ENCODE measurements at regions of chr16 and their contacts with region 1.

Region 1: GRCh38 chr16:87062569-87063442 is 254.4 kb downstream of the C16orf95 start:
- DNase-seq: peak; percentile 70 to 91
- ATAC-seq: peak; percentile 92 to 98
- H3K4me3 ChIP-seq: peak overlapping the region; percentile 30; the same call in 2 of the 3 replicates
- H3K27ac ChIP-seq: peak overlapping the region; percentile 58 to 69; a peak in 4 of 6 replicates
- H3K4me1 ChIP-seq: peaks cover 4% of the 10 kb centered on the region; the same call in 1 of the 3 replicates
- CTCF ChIP-seq: peak; percentile 84
- EP300 ChIP-seq: no peak
- POLR2A ChIP-seq: no peak
- RAD21 ChIP-seq: peak; percentile 92 to 98

Region 2: DNA sequence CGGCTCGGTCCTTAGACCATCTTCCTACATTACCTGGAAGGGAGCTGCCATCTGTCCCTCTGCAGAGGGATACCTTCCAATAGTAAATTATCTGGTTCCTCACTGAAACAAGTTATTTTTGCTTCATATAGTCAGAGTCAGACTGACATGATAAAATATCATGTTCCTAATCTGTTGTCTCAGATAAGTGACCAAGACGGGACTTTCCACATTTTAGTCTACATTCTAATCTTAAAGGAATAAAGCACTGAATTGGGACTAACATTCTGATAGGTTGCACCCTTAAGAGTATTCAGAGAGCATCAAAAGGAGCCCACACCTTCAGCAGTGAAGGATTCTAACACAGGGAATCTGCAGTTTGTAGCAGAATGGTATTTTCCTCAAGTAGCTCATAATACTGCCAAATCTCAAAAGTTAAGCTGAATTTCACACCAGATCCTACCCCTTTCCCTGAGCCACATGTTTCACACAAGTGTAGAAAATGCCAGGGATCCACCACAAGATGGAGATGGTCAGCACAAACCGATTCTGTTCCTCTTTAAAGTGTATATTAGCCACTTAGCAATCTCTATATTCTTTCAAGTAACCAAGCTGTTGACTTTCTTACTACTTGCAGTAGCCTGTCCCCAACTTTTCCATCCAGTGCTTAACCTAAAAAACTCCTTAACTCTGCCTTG is 1387.4 kb before region 1 on chr16:
- CTCF ChIA-PET with region 1: no interaction called
- POLR2A ChIA-PET with region 1: no interaction called
- DNase-seq: peak; percentile 36 to 45
- ATAC-seq: peak; percentile 73 to 76; a peak in 4 of 6 replicates
- H3K4me3 ChIP-seq: no peak overlapping the region
- H3K27ac ChIP-seq: no peak overlapping the region
- H3K4me1 ChIP-seq: no peaks in the 10 kb centered on the region
- CTCF ChIP-seq: peak; percentile 53
- EP300 ChIP-seq: no peak
- POLR2A ChIP-seq: no peak
- RAD21 ChIP-seq: peak in 1 of 2 experiments; percentile 29; a peak in 1 of 5 replicates

Region 3: GRCh38 chr16:86549076-86549890 is 513.5 kb before region 1 on chr16:
- CTCF ChIA-PET with region 1: interaction called, 19 read pairs
- POLR2A ChIA-PET with region 1: no interaction called
- DNase-seq: no peak
- ATAC-seq: peak; percentile 34 to 51; a peak in 2 of 6 replicates
- H3K4me3 ChIP-seq: no peak overlapping the region
- H3K27ac ChIP-seq: no peak overlapping the region
- H3K4me1 ChIP-seq: no peaks in the 10 kb centered on the region; the same call in 2 of the 3 replicates
- CTCF ChIP-seq: no peak
- EP300 ChIP-seq: no peak
- POLR2A ChIP-seq: no peak
- RAD21 ChIP-seq: no peak

Region 4: DNA sequence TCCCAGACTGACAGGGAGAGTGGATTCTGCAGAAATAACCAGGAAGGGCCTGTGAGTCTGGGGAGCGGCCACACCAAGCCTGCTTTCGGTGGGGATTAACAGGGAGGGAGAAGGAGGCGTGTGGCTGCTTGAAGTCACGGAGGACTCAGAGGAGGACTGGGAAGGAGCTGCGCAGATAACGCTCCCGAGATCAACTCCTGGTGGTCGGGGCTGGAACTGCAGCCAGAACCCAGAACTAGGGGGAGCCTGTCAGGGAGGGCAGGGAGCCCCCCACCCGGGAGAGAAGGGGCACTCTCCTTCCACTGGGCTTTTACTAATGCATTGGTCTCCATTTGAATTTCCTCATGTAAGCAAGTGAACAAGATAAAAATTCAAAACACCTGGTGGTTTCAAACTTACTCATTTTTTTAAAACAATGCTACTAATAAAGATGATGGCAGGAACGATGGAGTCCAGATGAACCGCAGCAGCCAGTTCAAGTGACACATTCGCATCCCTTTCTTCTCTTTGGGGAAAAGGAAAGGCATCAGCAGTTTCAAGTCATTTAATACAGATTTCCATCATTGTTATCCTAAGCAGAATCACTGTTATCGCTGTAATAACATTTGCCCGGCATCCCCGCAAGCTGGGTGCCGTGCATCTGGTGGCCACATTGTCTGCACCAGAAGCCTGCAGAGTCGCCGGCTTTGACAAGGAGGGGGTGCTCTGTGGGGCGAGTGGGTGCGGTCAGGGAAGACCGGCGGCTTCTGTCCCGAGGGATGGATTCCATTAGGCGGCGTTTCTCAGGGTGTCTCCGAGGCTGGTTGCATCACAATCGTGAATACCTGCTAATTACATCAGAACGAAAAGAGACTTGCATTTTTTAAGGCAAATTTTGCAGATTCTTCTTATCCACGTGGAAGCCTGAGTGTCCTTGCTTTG is 301.4 kb before region 1 on chr16:
- CTCF ChIA-PET with region 1: interaction called, 23 read pairs
- POLR2A ChIA-PET with region 1: no interaction called
- DNase-seq: peak; percentile 62 to 69
- ATAC-seq: peak; percentile 90 to 96
- H3K4me3 ChIP-seq: peak overlapping the region; percentile 24; the same call in 1 of the 3 replicates
- H3K27ac ChIP-seq: peak overlapping the region; percentile 5 to 69; a peak in 3 of 6 replicates
- H3K4me1 ChIP-seq: no peaks in the 10 kb centered on the region
- CTCF ChIP-seq: peak; percentile 56
- EP300 ChIP-seq: no peak
- POLR2A ChIP-seq: no peak
- RAD21 ChIP-seq: peak; percentile 53 to 58

Region 5: DNA sequence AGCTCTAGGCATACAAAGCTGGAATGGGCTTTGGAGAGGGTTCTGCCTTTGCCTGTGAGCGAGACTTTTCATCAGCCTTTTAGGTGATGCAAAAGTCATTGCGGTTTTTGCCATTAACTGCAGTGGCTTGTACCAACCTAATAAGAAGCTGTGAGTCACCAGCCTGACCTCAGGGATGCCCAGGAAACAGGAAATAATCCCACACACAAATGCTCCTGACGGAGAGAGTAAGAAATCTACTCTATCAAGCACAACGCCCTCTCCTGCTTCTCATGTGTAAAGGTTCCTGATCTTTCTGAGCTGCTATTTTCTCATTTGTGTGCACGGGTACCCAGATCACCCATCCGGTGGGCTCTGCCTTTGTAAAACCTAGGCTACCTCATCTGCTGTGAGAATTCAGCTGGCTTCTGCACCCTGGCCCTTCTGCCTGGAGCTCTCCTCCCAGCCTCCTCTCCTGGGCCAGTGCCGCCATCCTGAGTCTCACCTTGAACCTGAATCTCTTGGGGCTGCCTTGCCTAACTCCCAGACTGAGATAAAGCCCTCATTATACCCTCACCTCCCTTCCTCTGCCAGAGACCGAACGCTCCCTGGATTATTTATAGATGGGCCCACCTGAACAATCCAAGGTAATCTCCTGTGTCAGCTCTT is 45.3 kb before region 1 on chr16:
- CTCF ChIA-PET with region 1: interaction called, 16 read pairs
- POLR2A ChIA-PET with region 1: no interaction called
- DNase-seq: peak; percentile 56 to 84
- ATAC-seq: peak; percentile 84 to 93
- H3K4me3 ChIP-seq: no peak overlapping the region
- H3K27ac ChIP-seq: peak overlapping the region in 1 of 2 experiments; percentile 49; a peak in 2 of 6 replicates
- H3K4me1 ChIP-seq: peaks cover 3% of the 10 kb centered on the region; the same call in 1 of the 3 replicates
- CTCF ChIP-seq: peak; percentile 42
- EP300 ChIP-seq: no peak
- POLR2A ChIP-seq: no peak
- RAD21 ChIP-seq: peak; percentile 48 to 59

Region 6: GRCh38 chr16:87076950-87077749 is 14.3 kb after region 1 on chr16:
- CTCF ChIA-PET with region 1: interaction called, 82 read pairs
- POLR2A ChIA-PET with region 1: no interaction called
- DNase-seq: peak; percentile 26 to 79
- ATAC-seq: peak; percentile 87 to 94
- H3K4me3 ChIP-seq: no peak overlapping the region
- H3K27ac ChIP-seq: 0 out of 6 replicates have a peak overlapping the region, but pooled peaks of 1 of the 2 experiments have one; percentile 38
- H3K4me1 ChIP-seq: no peaks in the 10 kb centered on the region
- CTCF ChIP-seq: peak; percentile 61
- EP300 ChIP-seq: no peak
- POLR2A ChIP-seq: no peak
- RAD21 ChIP-seq: peak; percentile 64 to 71

Measured in A549 (cell line).